IMR-90 (cell line): ENCODE measurements at regions of chr2 and their contacts with region 1.

Region 1: GRCh38 chr2:189287982-189288521 is 108.5 kb upstream of the COL5A2 start:
- DNase-seq: peak; percentile 91
- ATAC-seq: peak; percentile 75
- H3K4me3 ChIP-seq: no peak overlapping the region
- H3K27ac ChIP-seq: peak overlapping the region; percentile 69; the same call in 1 of the 2 replicates
- H3K4me1 ChIP-seq: peaks cover 16% of the 10 kb centered on the region
- H3K27me3 ChIP-seq: no peaks in the 10 kb centered on the region
- CTCF ChIP-seq: peak; percentile 69
- POLR2A ChIP-seq: no peak
- RAD21 ChIP-seq: peak; percentile 81

Region 2: GRCh38 chr2:188524519-188525113 is 763.4 kb before region 1 on chr2:
- CTCF ChIA-PET with region 1: no interaction called
- POLR2A ChIA-PET with region 1: no interaction called
- dilution Hi-C with region 1: no loop called
- in situ Hi-C with region 1: no loop called
- intact Hi-C with region 1: loop called (anchors 5 kb)
- DNase-seq: peak; percentile 69
- ATAC-seq: peak; percentile 69; the same call in 1 of the 2 replicates
- H3K4me3 ChIP-seq: no peak overlapping the region
- H3K27ac ChIP-seq: no peak overlapping the region
- H3K4me1 ChIP-seq: peaks cover 2% of the 10 kb centered on the region; the same call in 1 of the 2 replicates
- H3K27me3 ChIP-seq: no peaks in the 10 kb centered on the region
- CTCF ChIP-seq: peak; percentile 85
- POLR2A ChIP-seq: no peak
- RAD21 ChIP-seq: peak; percentile 80

Region 3: DNA sequence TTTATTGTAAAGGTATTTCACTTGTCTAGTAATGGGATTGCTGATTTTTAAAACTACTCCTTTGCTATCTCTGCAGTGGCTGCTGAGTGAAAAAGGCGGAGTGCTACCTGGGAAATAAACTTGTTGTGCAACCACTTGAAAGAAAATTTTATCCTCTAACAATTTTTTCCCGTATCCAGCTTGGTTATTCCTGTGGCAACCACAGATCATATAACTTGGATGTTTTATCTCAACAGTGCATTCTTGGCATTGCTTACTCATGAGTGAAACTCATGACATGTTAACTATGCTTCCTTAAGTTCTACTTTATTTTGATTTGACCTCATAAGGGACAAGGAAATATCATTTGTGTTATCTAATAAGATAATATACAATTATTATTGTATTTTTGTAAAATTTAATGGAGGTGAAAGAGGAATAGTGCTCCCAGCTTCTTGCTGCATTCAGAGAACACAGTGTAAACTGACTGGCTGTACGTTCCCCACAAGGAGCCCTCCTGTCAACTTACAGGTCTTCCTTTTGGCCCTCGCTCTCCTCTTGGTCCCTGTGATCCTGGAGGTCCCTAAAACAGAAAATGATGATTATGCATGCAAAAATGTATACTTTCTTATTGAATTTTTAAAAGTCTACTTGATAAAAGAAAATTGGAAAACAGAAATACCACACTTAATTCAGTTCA is 191.1 kb before region 1 on chr2:
- CTCF ChIA-PET with region 1: interaction called, 3 read pairs
- POLR2A ChIA-PET with region 1: no interaction called
- dilution Hi-C with region 1: no loop called
- in situ Hi-C with region 1: loop called (anchors 10 kb)
- intact Hi-C with region 1: loop called (anchors 1 kb)
- DNase-seq: peak; percentile 95
- ATAC-seq: peak; percentile 82
- H3K4me3 ChIP-seq: no peak overlapping the region
- H3K27ac ChIP-seq: peak overlapping the region; percentile 99
- H3K4me1 ChIP-seq: peaks cover 10% of the 10 kb centered on the region
- H3K27me3 ChIP-seq: no peaks in the 10 kb centered on the region
- CTCF ChIP-seq: no peak
- POLR2A ChIP-seq: no peak
- RAD21 ChIP-seq: no peak

Region 4: DNA sequence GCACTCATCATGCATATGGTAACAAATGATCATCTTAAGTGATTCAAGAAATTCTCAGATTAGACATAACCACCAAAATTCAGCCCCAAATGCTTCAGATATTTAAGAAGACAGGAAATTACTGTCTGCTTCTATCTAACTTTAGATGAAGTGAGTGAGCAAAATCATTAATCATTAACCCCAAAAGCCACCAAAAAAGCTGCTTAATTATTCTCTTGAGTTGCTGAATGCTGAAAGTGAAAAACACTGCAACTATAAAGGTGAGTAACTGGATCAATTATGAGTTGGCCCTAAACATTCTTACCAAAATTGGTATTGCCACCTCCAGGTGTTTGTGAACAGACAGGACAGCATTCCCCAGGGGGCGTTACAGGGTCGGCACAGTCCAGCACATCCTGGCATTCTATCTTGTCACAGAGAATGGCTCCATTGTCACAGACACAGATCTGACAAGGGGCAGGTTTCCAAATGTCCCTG is 178.1 kb before region 1 on chr2:
- CTCF ChIA-PET with region 1: no interaction called
- POLR2A ChIA-PET with region 1: interaction called, 5 read pairs
- dilution Hi-C with region 1: no loop called
- in situ Hi-C with region 1: loop called (anchors 10 kb)
- intact Hi-C with region 1: loop called (anchors 5 kb)
- DNase-seq: peak; percentile 21
- ATAC-seq: no peak
- H3K4me3 ChIP-seq: no peak overlapping the region
- H3K27ac ChIP-seq: no peak overlapping the region; the same call in 1 of the 2 replicates
- H3K4me1 ChIP-seq: peaks cover 7% of the 10 kb centered on the region; the same call in 1 of the 2 replicates
- H3K27me3 ChIP-seq: no peaks in the 10 kb centered on the region
- CTCF ChIP-seq: no peak
- POLR2A ChIP-seq: no peak
- RAD21 ChIP-seq: no peak

Region 5: GRCh38 chr2:189115126-189115525 is 172.9 kb before region 1 on chr2:
- CTCF ChIA-PET with region 1: interaction called, 3 read pairs
- POLR2A ChIA-PET with region 1: interaction called, 5 read pairs
- dilution Hi-C with region 1: no loop called
- in situ Hi-C with region 1: no loop called
- intact Hi-C with region 1: loop called (anchors 5 kb)
- DNase-seq: peak; percentile 38
- ATAC-seq: no peak
- H3K4me3 ChIP-seq: no peak overlapping the region
- H3K27ac ChIP-seq: peak overlapping the region; percentile 61; the same call in 1 of the 2 replicates
- H3K4me1 ChIP-seq: peaks cover 17% of the 10 kb centered on the region
- H3K27me3 ChIP-seq: no peaks in the 10 kb centered on the region
- CTCF ChIP-seq: peak; percentile 32
- POLR2A ChIP-seq: no peak
- RAD21 ChIP-seq: peak; percentile 48

Region 6: DNA sequence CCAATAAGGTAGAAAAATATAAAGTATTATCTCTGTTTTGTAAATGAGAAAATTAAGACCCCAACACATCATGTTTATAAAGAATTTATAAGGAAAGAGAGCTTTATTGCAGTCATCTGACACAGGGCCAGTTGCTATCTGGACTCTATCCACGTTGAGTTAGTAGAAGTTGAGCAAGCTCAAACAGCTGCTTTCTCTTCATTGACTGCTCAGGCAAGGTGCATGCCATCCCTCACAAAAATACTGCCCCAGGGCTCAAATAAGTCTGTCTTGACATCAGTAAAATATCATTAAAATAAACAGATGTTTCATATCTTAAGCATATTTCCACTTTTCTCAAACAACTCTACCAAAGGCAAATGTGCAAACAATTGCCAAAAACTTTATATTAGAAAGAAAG is 123.3 kb before region 1 on chr2:
- CTCF ChIA-PET with region 1: no interaction called
- POLR2A ChIA-PET with region 1: no interaction called
- dilution Hi-C with region 1: no loop called
- in situ Hi-C with region 1: no loop called
- intact Hi-C with region 1: loop called (anchors 5 kb)
- DNase-seq: peak; percentile 80
- ATAC-seq: peak; percentile 33
- H3K4me3 ChIP-seq: no peak overlapping the region
- H3K27ac ChIP-seq: no peak overlapping the region
- H3K4me1 ChIP-seq: peaks cover 21% of the 10 kb centered on the region
- H3K27me3 ChIP-seq: no peaks in the 10 kb centered on the region
- CTCF ChIP-seq: no peak
- POLR2A ChIP-seq: no peak
- RAD21 ChIP-seq: no peak

Region 7: DNA sequence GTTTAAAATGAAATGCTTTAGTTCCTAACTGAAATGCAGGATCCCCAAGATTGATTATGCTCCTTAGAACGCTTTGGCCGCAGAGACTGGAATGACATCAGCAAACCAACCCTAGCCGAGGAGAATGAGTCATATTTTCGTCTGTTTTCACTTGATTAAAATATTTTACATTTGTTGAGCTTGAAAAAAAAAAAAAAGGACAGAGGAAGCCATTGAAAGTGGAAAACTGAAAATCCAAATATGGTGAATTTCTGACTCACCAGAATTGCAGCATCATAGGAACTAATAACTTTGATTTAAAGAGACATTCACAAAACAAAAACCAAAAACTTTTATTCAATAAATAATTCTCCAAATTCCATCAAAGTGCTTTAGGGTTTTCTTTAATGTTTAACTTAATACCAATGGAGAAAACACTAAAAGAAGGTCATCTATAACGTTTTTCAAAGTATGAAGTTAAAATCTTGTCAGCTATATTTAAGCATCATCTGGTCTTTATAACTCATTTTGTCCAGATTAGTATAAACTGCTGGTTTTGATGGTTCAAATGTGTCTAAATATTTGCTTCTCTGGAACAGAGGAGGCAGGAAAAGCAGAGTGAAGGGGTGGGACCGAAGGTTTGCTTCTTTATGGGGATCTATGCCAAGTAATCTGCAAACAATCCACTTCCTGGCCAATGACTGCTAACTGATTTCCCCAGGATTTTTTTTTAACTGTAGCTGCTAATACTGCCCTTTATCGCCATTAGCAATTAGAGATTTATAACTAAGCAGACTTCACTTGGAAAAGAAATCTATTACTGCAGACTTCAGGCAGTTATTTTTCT is 77.6 kb before region 1 on chr2:
- CTCF ChIA-PET with region 1: interaction called, 5 read pairs
- POLR2A ChIA-PET with region 1: no interaction called
- dilution Hi-C with region 1: no loop called
- in situ Hi-C with region 1: no loop called
- intact Hi-C with region 1: loop called (anchors 2 kb)
- DNase-seq: peak; percentile 98
- ATAC-seq: peak; percentile 73
- H3K4me3 ChIP-seq: peak overlapping the region; percentile 5; the same call in 1 of the 2 replicates
- H3K27ac ChIP-seq: peak overlapping the region; percentile 96
- H3K4me1 ChIP-seq: peaks cover 14% of the 10 kb centered on the region
- H3K27me3 ChIP-seq: no peaks in the 10 kb centered on the region
- CTCF ChIP-seq: no peak
- POLR2A ChIP-seq: no peak
- RAD21 ChIP-seq: no peak